Mammary epithelial cell (primary cell): ENCODE measurements at regions of chr14 and their contacts with region 1.

Region 1: DNA sequence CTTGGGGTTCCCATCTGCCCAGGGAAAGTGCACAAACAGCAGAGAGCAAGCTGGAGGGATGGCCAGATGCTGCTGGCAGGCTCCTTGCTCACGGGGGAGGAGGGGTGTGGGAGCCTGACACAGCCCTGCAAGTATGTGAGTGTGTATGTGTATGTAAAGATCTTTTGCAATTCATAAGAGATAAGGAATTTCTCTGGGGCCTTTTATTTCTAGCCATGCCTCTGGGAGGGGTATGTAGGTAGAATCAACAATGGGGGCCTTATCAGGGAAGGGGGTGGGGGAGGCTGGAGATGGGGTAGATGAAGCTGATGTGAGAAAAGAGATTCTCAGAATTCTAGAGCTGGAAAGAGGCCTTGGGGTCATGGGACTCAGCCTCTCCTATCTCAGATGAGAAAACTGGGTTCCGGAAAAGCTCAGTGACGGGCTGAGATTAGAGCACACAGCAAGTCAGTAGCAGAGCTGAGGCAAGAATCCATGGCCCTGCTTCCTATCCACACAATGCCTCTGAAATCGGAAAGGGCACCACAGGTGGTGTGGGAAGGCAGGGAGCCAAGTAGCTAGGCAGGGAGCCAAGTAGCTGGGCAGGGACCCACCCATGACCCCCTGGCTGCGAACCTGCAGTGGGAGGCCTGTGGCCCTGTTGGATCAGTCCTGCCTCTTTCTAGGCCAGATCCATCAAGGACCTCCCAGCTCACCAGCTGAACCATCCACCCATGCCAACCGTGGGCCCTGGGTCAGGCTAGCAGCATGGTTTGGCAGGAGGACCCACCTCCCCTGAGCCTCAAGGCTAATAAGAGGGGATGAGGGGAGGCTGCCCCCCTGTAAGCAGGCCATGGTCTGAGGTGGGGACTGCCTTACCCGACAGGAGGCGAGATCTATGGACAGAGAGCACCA is 54.7 kb downstream of the PLEKHG3 start:
- DNase-seq: peak; percentile 82
- H3K4me3 ChIP-seq: no peak overlapping the region
- H3K27ac ChIP-seq: peak overlapping the region; percentile 68
- H3K4me1 ChIP-seq: peaks cover 78% of the 10 kb centered on the region
- H3K27me3 ChIP-seq: no peaks in the 10 kb centered on the region
- CTCF ChIP-seq: no peak

Region 2: GRCh38 chr14:64715628-64716412 is 43.1 kb before region 1 on chr14:
- CTCF ChIA-PET with region 1: no interaction called
- dilution Hi-C with region 1: no loop called
- in situ Hi-C with region 1: no loop called
- intact Hi-C with region 1: no loop called
- DNase-seq: peak; percentile 69
- H3K4me3 ChIP-seq: peak overlapping the region; percentile 14 to 35 (median 30)
- H3K27ac ChIP-seq: peak overlapping the region; percentile 71
- H3K4me1 ChIP-seq: peaks cover 64% of the 10 kb centered on the region
- H3K27me3 ChIP-seq: no peaks in the 10 kb centered on the region
- CTCF ChIP-seq: no peak

Region 3: GRCh38 chr14:64726585-64726890 is 32.4 kb before region 1 on chr14:
- CTCF ChIA-PET with region 1: no interaction called
- dilution Hi-C with region 1: no loop called
- in situ Hi-C with region 1: no loop called
- intact Hi-C with region 1: loop called (anchors 1 kb)
- DNase-seq: peak; percentile 99
- H3K4me3 ChIP-seq: no peak overlapping the region
- H3K27ac ChIP-seq: peak overlapping the region; percentile 89
- H3K4me1 ChIP-seq: peaks cover 61% of the 10 kb centered on the region
- H3K27me3 ChIP-seq: no peaks in the 10 kb centered on the region
- CTCF ChIP-seq: no peak

Region 4: GRCh38 chr14:64928239-64929013 is 169.5 kb after region 1 on chr14:
- CTCF ChIA-PET with region 1: no interaction called
- dilution Hi-C with region 1: no loop called
- in situ Hi-C with region 1: no loop called
- intact Hi-C with region 1: no loop called
- DNase-seq: no peak
- H3K4me3 ChIP-seq: no peak overlapping the region
- H3K27ac ChIP-seq: no peak overlapping the region
- H3K4me1 ChIP-seq: no peaks in the 10 kb centered on the region
- H3K27me3 ChIP-seq: no peaks in the 10 kb centered on the region
- CTCF ChIP-seq: no peak

Region 5: GRCh38 chr14:65080960-65081747 is 322.2 kb after region 1 on chr14:
- CTCF ChIA-PET with region 1: no interaction called
- dilution Hi-C with region 1: no loop called
- in situ Hi-C with region 1: no loop called
- intact Hi-C with region 1: no loop called
- DNase-seq: no peak
- H3K4me3 ChIP-seq: no peak overlapping the region
- H3K27ac ChIP-seq: no peak overlapping the region
- H3K4me1 ChIP-seq: no peaks in the 10 kb centered on the region
- H3K27me3 ChIP-seq: no peaks in the 10 kb centered on the region
- CTCF ChIP-seq: no peak